ENCODE measurements at regions of chr1 and their contacts with region 1.

Region 1: GRCh38 chr1:207952617-207953542 is 42.0 kb upstream of the CD34 start:
- DNase-seq: no peak
- H3K4me3 ChIP-seq: no peak overlapping the region
- H3K27ac ChIP-seq: no peak overlapping the region
- H3K4me1 ChIP-seq: no peaks in the 10 kb centered on the region; a peak in 1 of 4 replicates
- H3K27me3 ChIP-seq: no peaks in the 10 kb centered on the region; the same call in 1 of the 2 replicates
- CTCF ChIP-seq: no peak
- EP300 ChIP-seq: no peak
- RAD21 ChIP-seq: no peak

Region 2: GRCh38 chr1:207779008-207779407 is 173.9 kb before region 1 on chr1:
- CTCF ChIA-PET with region 1: no interaction called
- POLR2A ChIA-PET with region 1: no interaction called
- DNase-seq: no peak
- H3K4me3 ChIP-seq: no peak overlapping the region
- H3K27ac ChIP-seq: no peak overlapping the region
- H3K4me1 ChIP-seq: no peaks in the 10 kb centered on the region
- H3K27me3 ChIP-seq: no peaks in the 10 kb centered on the region
- CTCF ChIP-seq: no peak
- EP300 ChIP-seq: no peak
- RAD21 ChIP-seq: no peak

Region 3: DNA sequence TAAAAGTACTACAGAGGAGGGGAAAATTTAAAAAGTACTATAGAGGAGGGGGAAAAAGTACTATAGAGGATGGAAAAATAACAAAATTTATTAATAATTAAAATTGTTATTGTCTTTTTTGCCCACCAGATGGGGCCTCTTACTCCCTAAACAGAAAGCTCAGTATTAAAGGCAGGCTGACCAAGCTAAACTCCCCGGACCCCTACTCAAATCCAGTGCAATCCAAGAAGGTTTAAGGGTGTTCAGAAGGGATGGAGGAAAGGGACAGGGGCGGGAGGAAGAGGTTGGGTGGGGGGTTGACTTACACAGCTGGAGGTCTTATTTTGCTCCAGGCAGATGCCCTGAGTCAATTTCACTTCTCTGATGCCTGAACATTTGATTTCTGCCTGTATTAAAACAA is 55.7 kb before region 1 on chr1:
- CTCF ChIA-PET with region 1: interaction called, 13 read pairs
- POLR2A ChIA-PET with region 1: no interaction called
- DNase-seq: peak; percentile 48
- H3K4me3 ChIP-seq: no peak overlapping the region
- H3K27ac ChIP-seq: no peak overlapping the region
- H3K4me1 ChIP-seq: no peaks in the 10 kb centered on the region
- H3K27me3 ChIP-seq: no peaks in the 10 kb centered on the region
- CTCF ChIP-seq: peak; percentile 49
- EP300 ChIP-seq: no peak
- RAD21 ChIP-seq: peak; percentile 61